Esophagus muscularis mucosa (tissue), 4 donors: ENCODE measurements at regions of chr1 and their contacts with region 1.

Region 1: DNA sequence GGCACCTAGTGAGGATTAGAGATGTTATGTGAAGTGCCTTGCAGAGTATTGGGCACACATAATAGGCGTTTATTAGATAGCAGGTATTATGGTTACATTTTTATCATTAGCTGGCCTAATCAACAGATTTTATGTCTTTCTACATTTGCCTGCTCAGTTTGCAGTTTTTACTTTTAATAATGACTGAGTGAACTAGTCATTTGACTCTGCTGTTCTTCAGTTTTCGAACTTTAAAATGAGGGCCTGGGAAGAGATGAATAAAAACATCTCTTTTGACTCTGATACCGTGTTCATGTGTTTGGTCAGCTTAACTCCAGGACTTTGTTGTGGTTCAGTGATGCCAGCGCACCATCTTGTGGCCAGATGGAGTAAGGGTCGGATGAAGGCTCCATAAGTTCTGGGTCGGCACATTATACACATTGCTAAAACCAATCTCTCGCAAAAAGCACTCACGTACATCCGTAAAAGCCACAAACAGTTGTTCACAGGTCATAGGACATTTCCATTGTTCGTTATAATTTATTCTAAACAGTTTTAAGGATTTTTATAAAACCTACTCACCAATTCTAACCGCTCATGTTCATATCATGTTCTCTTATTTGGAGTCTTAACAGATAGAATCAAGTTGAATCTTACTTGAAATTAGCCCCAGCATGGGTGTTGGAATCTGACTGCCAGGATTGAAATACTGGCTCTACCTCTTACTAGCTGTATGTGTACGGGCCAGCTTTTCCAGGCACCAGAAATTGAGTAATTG is 78.4 kb upstream of the GPR88 start:
- DNase-seq: no peak
- H3K4me3 ChIP-seq: no peak overlapping the region
- H3K27ac ChIP-seq: peak overlapping the region in 3 of 4 donors; percentile 0 to 46 (median 31)
- H3K4me1 ChIP-seq: peaks cover 0 to 26% (median 16%) of the 10 kb centered on the region in 4 donors
- H3K27me3 ChIP-seq: no peaks in the 10 kb centered on the region
- CTCF ChIP-seq: peak; percentile 84 to 90 (median 90)
- EP300 ChIP-seq: no peak
- POLR2A ChIP-seq: no peak

Region 2: DNA sequence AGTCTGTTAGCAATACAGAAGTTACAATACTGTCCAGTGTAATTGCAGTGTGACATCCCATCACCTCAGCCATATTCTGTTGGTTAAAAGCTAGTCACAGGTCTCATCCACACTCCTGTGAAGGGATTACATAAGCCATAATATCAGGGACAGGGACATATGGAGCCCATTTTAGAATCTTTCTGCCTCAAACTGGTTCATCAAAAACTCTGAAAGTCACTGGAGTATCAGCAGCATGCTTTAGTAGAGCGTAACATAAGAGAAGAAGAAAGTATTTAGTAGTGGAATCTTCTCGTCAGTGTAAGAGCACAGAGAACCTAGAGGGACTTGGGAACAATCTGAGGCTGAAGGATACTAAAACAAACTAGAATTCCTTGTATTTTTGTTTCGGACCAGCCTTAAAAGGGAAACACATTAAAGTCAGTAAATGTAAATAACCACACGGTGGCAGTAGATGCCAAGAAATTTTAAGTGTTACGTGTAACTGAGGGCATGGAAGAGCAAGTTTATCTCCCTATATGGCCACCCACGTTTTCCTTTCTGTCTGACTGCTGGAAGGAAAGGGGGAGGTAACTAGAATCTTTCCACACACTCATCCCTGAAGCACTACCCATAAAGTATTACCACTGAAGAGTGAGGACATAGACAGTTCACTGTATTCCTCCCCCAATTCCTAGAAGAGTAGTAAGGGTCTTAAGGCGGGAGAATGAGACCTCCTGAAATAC is 651.0 kb before region 1 on chr1:
- intact Hi-C with region 1: loop called (anchors 5 kb)
- DNase-seq: no peak
- H3K4me3 ChIP-seq: peak overlapping the region in 3 of 4 donors; percentile 8 to 28 (median 24)
- H3K27ac ChIP-seq: peak overlapping the region; percentile 74 to 82 (median 78)
- H3K4me1 ChIP-seq: peaks cover 6 to 13% (median 12%) of the 10 kb centered on the region in 4 donors
- H3K27me3 ChIP-seq: no peaks in the 10 kb centered on the region
- CTCF ChIP-seq: peak; percentile 68 to 72 (median 68)
- EP300 ChIP-seq: no peak
- POLR2A ChIP-seq: no peak

Region 3: GRCh38 chr1:100277866-100278265 is 181.7 kb before region 1 on chr1:
- intact Hi-C with region 1: loop called (anchors 10 kb)
- DNase-seq: no peak
- H3K4me3 ChIP-seq: no peak overlapping the region
- H3K27ac ChIP-seq: no peak overlapping the region
- H3K4me1 ChIP-seq: peaks cover 0 to 6% (median 2%) of the 10 kb centered on the region in 4 donors
- H3K27me3 ChIP-seq: no peaks in the 10 kb centered on the region
- CTCF ChIP-seq: no peak
- EP300 ChIP-seq: no peak
- POLR2A ChIP-seq: no peak

Region 4: GRCh38 chr1:100351095-100351891 is 108.2 kb before region 1 on chr1:
- intact Hi-C with region 1: loop called (anchors 5 kb)
- DNase-seq: peak; percentile 95
- H3K4me3 ChIP-seq: peak overlapping the region; percentile 78 to 95 (median 80)
- H3K27ac ChIP-seq: peak overlapping the region; percentile 88 to 91 (median 89)
- H3K4me1 ChIP-seq: peaks cover 22 to 38% (median 31%) of the 10 kb centered on the region in 4 donors
- H3K27me3 ChIP-seq: no peaks in the 10 kb centered on the region
- CTCF ChIP-seq: peak; percentile 24 to 26 (median 25)
- EP300 ChIP-seq: no peak
- POLR2A ChIP-seq: no peak

Region 5: GRCh38 chr1:100400404-100400803 is 59.1 kb before region 1 on chr1:
- intact Hi-C with region 1: no loop called
- DNase-seq: no peak
- H3K4me3 ChIP-seq: no peak overlapping the region
- H3K27ac ChIP-seq: no peak overlapping the region
- H3K4me1 ChIP-seq: peaks cover 0 to 12% (median 4%) of the 10 kb centered on the region in 4 donors
- H3K27me3 ChIP-seq: no peaks in the 10 kb centered on the region
- CTCF ChIP-seq: no peak
- EP300 ChIP-seq: no peak
- POLR2A ChIP-seq: no peak

Region 6: DNA sequence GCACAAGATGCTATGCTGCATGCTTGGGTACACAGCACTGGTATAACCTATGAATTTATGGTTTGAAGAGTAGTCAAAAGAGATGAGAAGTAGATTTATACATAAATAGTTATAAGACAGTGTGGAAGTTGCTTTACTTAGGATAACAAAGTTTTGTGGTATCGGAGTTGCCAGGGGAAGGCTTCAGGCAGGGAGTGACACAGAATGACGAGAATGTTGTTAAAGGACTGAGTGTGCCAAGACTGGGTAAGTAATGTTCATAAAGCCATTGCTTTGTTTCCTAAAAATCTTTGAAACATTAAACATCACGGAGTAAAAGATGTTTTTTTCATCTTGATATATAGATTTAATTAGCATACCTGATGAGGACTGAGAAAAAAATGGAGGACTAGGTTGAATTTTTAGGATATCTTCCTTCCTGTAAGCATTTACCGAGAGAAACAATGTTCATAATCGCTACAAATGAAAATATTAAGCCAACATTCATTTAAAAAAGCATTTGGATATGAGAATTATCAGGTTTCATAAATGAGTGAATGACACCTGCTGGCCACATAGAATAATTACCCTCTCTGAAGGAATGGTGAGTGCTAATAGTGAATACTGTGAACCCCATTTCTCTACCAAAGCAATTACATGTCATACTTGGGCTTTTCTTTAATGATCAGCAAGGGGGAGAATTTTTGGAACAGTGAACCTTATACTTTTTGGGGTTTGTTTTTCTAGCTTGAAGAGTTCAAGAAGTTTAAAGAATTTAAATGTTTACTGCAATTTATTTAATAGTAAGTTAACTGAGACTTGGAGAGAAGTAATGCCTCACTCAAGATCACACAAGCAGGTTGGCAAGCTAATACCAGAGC is 406.7 kb after region 1 on chr1:
- intact Hi-C with region 1: loop called (anchors 5 kb)
- DNase-seq: no peak
- H3K4me3 ChIP-seq: no peak overlapping the region
- H3K27ac ChIP-seq: no peak overlapping the region
- H3K4me1 ChIP-seq: peaks cover 0 to 34% (median 27%) of the 10 kb centered on the region in 4 donors
- H3K27me3 ChIP-seq: no peaks in the 10 kb centered on the region
- CTCF ChIP-seq: peak; percentile 42 to 59 (median 49)
- EP300 ChIP-seq: no peak
- POLR2A ChIP-seq: no peak